Panc1 (cell line): ENCODE measurements at regions of chr12 and their contacts with region 1.

Region 1: GRCh38 chr12:47742253-47742825 is 16.3 kb downstream of the RAPGEF3 start:
- DNase-seq: peak; percentile 65
- ATAC-seq: peak; percentile 69
- H3K4me3 ChIP-seq: no peak overlapping the region
- H3K27ac ChIP-seq: no peak overlapping the region
- H3K4me1 ChIP-seq: no peaks in the 10 kb centered on the region; the same call in 1 of the 2 replicates
- H3K27me3 ChIP-seq: no peaks in the 10 kb centered on the region
- CTCF ChIP-seq: peak; percentile 99

Region 2: GRCh38 chr12:47657565-47657964 is 84.8 kb before region 1 on chr12:
- CTCF ChIA-PET with region 1: no interaction called
- POLR2A ChIA-PET with region 1: no interaction called
- in situ Hi-C with region 1: no loop called
- intact Hi-C with region 1: no loop called
- DNase-seq: no peak
- ATAC-seq: no peak
- H3K4me3 ChIP-seq: no peak overlapping the region
- H3K27ac ChIP-seq: no peak overlapping the region
- H3K4me1 ChIP-seq: no peaks in the 10 kb centered on the region
- H3K27me3 ChIP-seq: no peaks in the 10 kb centered on the region
- CTCF ChIP-seq: peak; percentile 17; the same call in 1 of the 2 replicates

Region 3: DNA sequence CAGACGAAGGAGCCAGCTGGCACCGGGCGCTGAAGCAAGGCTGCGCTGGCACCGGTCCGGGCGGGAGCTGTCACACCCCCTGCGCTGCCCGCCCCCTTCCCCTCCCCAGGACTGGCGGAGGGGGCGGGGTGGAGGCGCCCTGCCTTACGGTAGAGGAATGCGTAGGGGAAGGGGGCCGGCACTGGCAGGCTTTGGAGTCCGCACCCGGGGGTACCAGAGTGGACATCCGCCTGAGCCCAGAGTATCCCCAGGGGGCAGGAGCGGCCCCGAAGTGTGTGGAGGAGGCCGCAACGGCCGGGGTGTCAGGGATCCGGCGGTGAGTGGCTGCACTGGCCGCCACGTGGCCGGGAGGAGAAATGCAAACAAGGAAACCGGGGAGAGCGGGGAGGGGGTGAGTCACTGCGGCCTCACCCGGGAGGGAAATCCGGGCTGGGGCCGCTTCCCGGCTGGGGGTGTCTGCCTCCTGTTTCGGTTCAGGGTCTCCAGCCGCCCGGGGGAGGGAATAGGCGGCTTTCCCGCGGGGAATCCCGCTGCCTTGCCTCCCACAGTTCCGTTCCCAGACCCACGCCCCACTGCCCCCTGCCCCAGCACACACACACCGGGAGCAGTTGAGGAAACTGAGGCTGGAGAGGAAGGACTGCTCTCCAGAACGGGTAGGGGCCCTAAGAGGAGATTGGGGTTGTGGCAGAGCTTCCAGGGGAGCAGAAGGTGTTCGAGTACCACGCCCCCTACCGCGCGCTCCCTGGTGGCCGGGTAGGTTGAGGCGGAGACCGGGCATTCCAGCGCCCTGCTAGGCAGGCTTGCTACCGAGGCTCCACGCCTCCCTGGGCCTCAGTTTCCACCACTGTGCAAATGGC is 16.7 kb after region 1 on chr12 and contains the start of gene RAPGEF3:
- CTCF ChIA-PET with region 1: interaction called, 13 read pairs
- POLR2A ChIA-PET with region 1: no interaction called
- in situ Hi-C with region 1: no loop called
- intact Hi-C with region 1: no loop called
- DNase-seq: no peak
- ATAC-seq: peak; percentile 92
- H3K4me3 ChIP-seq: peak within 1 kb of the TSS; percentile 74 to 87
- H3K27ac ChIP-seq: peak within 1 kb of the TSS; percentile 85
- H3K4me1 ChIP-seq: peaks cover 24% of the 10 kb centered on the region
- H3K27me3 ChIP-seq: no peaks in the 10 kb centered on the region
- CTCF ChIP-seq: peak; percentile 90
- total RNA-seq, gene RAPGEF3: 5.8 TPM

Region 4: GRCh38 chr12:47767216-47767724 is 24.9 kb after region 1 on chr12:
- CTCF ChIA-PET with region 1: interaction called, 20 read pairs
- POLR2A ChIA-PET with region 1: no interaction called
- in situ Hi-C with region 1: no loop called
- intact Hi-C with region 1: no loop called
- DNase-seq: no peak
- ATAC-seq: peak; percentile 49; the same call in 1 of the 2 replicates
- H3K4me3 ChIP-seq: no peak overlapping the region
- H3K27ac ChIP-seq: peak overlapping the region; percentile 31; the same call in 1 of the 2 replicates
- H3K4me1 ChIP-seq: peaks cover 26% of the 10 kb centered on the region
- H3K27me3 ChIP-seq: no peaks in the 10 kb centered on the region
- CTCF ChIP-seq: peak; percentile 85

Region 5: GRCh38 chr12:47779301-47779942 is 37.1 kb after region 1 on chr12:
- CTCF ChIA-PET with region 1: interaction called, 10 read pairs
- POLR2A ChIA-PET with region 1: interaction called, 3 read pairs
- in situ Hi-C with region 1: no loop called
- intact Hi-C with region 1: loop called (anchors 2 kb)
- DNase-seq: peak; percentile 76
- ATAC-seq: peak; percentile 90
- H3K4me3 ChIP-seq: no peak overlapping the region
- H3K27ac ChIP-seq: no peak overlapping the region
- H3K4me1 ChIP-seq: peaks cover 33% of the 10 kb centered on the region
- H3K27me3 ChIP-seq: no peaks in the 10 kb centered on the region
- CTCF ChIP-seq: peak; percentile 97